ENCODE measurements at regions of chr10 and their contacts with region 1.

Region 1: GRCh38 chr10:70827086-70827757 is 11.5 kb downstream of the SGPL1 start:
- DNase-seq: peak; percentile 96
- ATAC-seq: peak; percentile 70
- H3K4me3 ChIP-seq: peak overlapping the region; percentile 29
- H3K27ac ChIP-seq: peak overlapping the region; percentile 84
- H3K4me1 ChIP-seq: peaks cover 67% of the 10 kb centered on the region
- H3K27me3 ChIP-seq: no peaks in the 10 kb centered on the region
- CTCF ChIP-seq: no peak

Region 2: GRCh38 chr10:70843776-70844489 is 16.7 kb after region 1 on chr10:
- CTCF ChIA-PET with region 1: no interaction called
- POLR2A ChIA-PET with region 1: no interaction called
- intact Hi-C with region 1: loop called (anchors 2 kb)
- DNase-seq: peak; percentile 61
- ATAC-seq: peak; percentile 64
- H3K4me3 ChIP-seq: no peak overlapping the region
- H3K27ac ChIP-seq: peak overlapping the region; percentile 4; the same call in 1 of the 2 replicates
- H3K4me1 ChIP-seq: peaks cover 30% of the 10 kb centered on the region
- H3K27me3 ChIP-seq: no peaks in the 10 kb centered on the region
- CTCF ChIP-seq: no peak

Region 3: DNA sequence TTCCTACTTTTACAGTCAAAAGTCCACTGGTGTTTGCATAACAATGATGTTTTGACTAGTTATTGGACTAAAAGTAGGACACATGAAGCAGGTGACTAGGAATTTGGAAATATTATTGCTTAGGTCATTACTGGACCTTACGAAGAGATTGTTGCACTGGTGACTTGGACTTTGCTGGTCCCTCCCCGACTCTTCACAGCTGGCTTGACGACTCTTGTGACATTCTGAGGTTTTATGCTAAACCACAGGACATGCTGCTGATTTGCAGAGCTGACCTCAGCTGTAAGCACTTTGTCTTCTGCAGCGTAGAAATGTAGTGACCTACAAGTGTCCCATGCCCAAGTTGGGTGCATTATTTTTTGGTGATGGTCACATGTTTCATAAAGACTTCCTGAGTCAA is 39.2 kb after region 1 on chr10:
- CTCF ChIA-PET with region 1: interaction called, 9 read pairs
- POLR2A ChIA-PET with region 1: no interaction called
- intact Hi-C with region 1: loop called (anchors 1 kb)
- DNase-seq: peak; percentile 89
- ATAC-seq: peak; percentile 63
- H3K4me3 ChIP-seq: peak overlapping the region; percentile 51
- H3K27ac ChIP-seq: peak overlapping the region; percentile 89
- H3K4me1 ChIP-seq: peaks cover 35% of the 10 kb centered on the region
- H3K27me3 ChIP-seq: no peaks in the 10 kb centered on the region
- CTCF ChIP-seq: no peak

Region 4: DNA sequence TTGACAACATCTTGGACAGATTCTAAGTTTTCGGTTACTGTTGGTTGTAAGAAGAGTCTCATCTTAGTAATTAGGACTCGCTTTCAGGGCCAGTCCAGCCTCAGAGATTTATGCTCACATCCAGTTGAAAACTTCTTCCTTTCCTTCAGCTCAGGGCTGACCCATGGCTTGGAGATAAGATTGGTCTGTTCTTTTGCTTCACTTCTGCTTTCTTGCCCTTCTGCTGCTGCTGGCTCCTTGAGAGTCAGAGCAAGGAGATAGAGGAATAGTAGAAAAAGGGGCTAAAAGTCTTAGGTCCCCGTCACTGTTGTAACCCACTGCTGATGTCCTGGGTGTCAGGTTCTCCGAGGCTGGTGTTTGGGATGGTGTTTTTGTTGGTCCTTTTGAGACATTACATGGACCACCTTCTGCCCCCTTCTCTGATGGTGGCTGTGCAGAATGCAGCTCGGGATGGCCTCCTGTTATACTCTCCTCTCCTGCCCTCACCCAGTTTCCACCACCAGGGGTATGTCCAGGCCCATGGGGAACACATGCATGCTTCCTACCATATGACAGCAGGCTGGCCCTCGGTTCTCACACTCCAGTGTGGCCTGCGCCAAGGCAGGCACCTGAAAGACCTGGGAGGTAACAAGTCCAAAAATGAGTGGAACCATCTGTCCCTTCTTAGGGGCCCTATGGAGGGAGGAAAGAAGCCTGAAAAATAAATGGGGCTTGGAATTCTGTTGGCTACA is 129.0 kb after region 1 on chr10:
- CTCF ChIA-PET with region 1: no interaction called
- POLR2A ChIA-PET with region 1: no interaction called
- intact Hi-C with region 1: no loop called
- DNase-seq: peak; percentile 18
- ATAC-seq: no peak
- H3K4me3 ChIP-seq: no peak overlapping the region
- H3K27ac ChIP-seq: no peak overlapping the region
- H3K4me1 ChIP-seq: no peaks in the 10 kb centered on the region
- H3K27me3 ChIP-seq: peaks cover 43% of the 10 kb centered on the region
- CTCF ChIP-seq: no peak

Measured in PC-3 (cell line).